Posterior vena cava (tissue), 2 donors: ENCODE measurements at regions of chr2 and their contacts with region 1.

Region 1: DNA sequence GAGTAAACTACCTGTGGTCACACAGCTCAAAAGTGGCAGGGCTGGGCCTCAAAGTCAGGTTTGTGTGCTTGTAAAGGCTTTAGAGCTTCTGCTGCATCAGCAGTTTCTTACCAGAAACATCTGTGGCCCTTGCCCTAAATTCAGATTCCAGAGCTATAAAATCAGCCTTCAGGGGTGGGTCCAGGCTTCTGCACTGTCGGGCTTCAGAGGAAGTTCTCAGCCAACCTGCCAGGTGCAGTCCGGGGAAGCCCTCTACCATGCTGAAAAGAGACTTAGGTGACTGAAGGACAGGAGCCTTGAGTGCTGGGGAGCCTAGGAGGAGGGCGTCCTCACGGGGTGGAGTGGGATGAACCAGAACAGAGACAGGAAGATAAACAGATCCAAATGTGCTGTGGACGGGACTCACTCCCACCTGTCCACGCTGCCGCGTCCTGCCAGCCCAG is 69.9 kb upstream of the HS6ST1 start:
- DNase-seq: peak; percentile 48

Region 2: GRCh38 chr2:128345436-128346350 is 42.8 kb before region 1 on chr2:
- intact Hi-C with region 1: loop called in 1 of 2 experiments (anchors 1 kb)
- DNase-seq: no peak

Region 3: GRCh38 chr2:128449226-128450061 is 60.9 kb after region 1 on chr2:
- intact Hi-C with region 1: no loop called
- DNase-seq: no peak

Region 4: DNA sequence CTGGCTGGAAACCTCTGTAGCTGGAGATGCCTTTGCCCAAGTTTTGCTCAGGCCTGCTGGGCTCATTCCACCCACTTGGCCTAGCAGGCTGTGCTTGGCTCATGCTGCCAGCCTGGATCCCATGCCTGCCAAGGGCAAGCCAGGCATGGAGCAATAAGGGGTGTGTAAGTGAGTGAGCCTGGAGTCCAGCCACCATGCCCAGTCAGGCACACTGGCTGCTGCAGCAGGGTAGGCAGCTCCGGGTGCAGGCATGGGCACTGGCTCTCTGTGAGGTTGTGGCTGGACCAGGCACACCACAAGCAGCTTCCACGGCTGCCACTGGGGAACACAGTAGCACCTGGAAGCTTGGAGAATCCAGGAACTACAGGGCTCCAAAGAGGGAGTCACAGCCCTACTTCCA is 77.9 kb after region 1 on chr2:
- intact Hi-C with region 1: no loop called
- DNase-seq: no peak

Region 5: DNA sequence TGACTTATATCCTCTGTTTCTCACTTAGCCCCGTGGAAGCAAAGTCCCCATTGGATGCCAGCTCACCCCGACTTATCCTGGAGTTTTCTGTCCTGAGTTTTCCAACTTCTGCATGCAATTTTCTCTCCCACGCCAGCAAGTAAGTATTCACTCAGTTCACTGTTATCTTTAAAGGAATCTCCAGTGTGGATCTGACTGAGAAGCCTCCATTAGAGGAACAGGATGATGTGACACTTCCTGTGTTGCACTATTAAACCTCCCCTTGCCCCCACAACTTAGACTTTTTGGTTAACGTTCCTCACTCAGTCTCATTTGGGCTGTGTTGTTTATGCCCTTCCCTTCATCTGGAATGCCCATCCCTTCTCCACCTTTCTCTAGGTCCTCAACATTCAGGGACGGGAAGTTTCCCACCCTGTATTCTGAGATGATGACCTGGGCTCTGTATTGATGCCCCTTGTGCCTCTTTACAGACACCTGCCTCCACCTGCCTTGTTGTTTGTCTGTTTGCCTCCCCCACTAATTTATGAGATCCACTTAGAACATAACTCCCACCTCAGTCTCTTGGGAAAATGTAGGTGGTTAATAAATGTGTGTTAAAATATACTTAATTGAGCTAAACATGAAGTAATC is 1054.8 kb after region 1 on chr2:
- intact Hi-C with region 1: loop called in 1 of 2 experiments (anchors 5 kb)
- DNase-seq: no peak